ENCODE measurements at regions of chr16 and their contacts with region 1.

Region 1: GRCh38 chr16:21300309-21301167 is 22.4 kb upstream of the CRYM start:
- DNase-seq: peak; percentile 96 to 99
- ATAC-seq: peak; percentile 86 to 89
- H3K4me3 ChIP-seq: peak overlapping the region; percentile 63
- H3K27ac ChIP-seq: peak overlapping the region; percentile 82 to 93
- H3K4me1 ChIP-seq: peaks cover 30% of the 10 kb centered on the region
- CTCF ChIP-seq: peak; percentile 97
- EP300 ChIP-seq: 0 out of 5 replicates have a peak, but pooled peaks of 1 of the 2 experiments have one; percentile 7
- POLR2A ChIP-seq: peak; percentile 53
- RAD21 ChIP-seq: peak; percentile 98 to 99

Region 2: GRCh38 chr16:21158208-21159110 is 142.1 kb before region 1 on chr16 and contains the start of gene LDAF1:
- CTCF ChIA-PET with region 1: interaction called, 141 read pairs
- POLR2A ChIA-PET with region 1: interaction called, 24 read pairs
- DNase-seq: peak; percentile 64 to 75
- ATAC-seq: peak; percentile 97 to 99
- H3K4me3 ChIP-seq: peak within 1 kb of the TSS; percentile 83
- H3K27ac ChIP-seq: peak within 1 kb of the TSS; percentile 84 to 95
- H3K4me1 ChIP-seq: peaks cover 25% of the 10 kb centered on the region; the same call in 2 of the 3 replicates
- CTCF ChIP-seq: no peak
- EP300 ChIP-seq: no peak
- POLR2A ChIP-seq: no peak; the same call in 1 of the 2 replicates
- RAD21 ChIP-seq: no peak; a peak in 1 of 5 replicates
- polyA plus RNA-seq, gene LDAF1: 14.4 and 16.2 TPM in 2 replicates

Region 3: GRCh38 chr16:21167360-21167759 is 133.2 kb before region 1 on chr16:
- CTCF ChIA-PET with region 1: interaction called, 141 read pairs
- POLR2A ChIA-PET with region 1: interaction called, 3 read pairs
- DNase-seq: peak; percentile 39 to 62
- ATAC-seq: peak; percentile 48 to 80; a peak in 5 of 6 replicates
- H3K4me3 ChIP-seq: no peak overlapping the region
- H3K27ac ChIP-seq: peak overlapping the region in 1 of 2 experiments; percentile 30; a peak in 1 of 6 replicates
- H3K4me1 ChIP-seq: peaks cover 24% of the 10 kb centered on the region; the same call in 2 of the 3 replicates
- CTCF ChIP-seq: no peak
- EP300 ChIP-seq: no peak
- POLR2A ChIP-seq: no peak
- RAD21 ChIP-seq: no peak

Region 4: GRCh38 chr16:21194771-21195301 is 105.7 kb before region 1 on chr16:
- CTCF ChIA-PET with region 1: interaction called, 114 read pairs
- POLR2A ChIA-PET with region 1: interaction called, 3 read pairs
- DNase-seq: no peak
- ATAC-seq: no peak
- H3K4me3 ChIP-seq: no peak overlapping the region
- H3K27ac ChIP-seq: no peak overlapping the region
- H3K4me1 ChIP-seq: no peaks in the 10 kb centered on the region
- CTCF ChIP-seq: no peak
- EP300 ChIP-seq: no peak
- POLR2A ChIP-seq: no peak
- RAD21 ChIP-seq: no peak

Region 5: GRCh38 chr16:21239646-21240045 is 60.9 kb before region 1 on chr16:
- CTCF ChIA-PET with region 1: no interaction called
- POLR2A ChIA-PET with region 1: no interaction called
- DNase-seq: no peak
- ATAC-seq: no peak
- H3K4me3 ChIP-seq: no peak overlapping the region
- H3K27ac ChIP-seq: no peak overlapping the region
- H3K4me1 ChIP-seq: no peaks in the 10 kb centered on the region
- CTCF ChIP-seq: no peak
- EP300 ChIP-seq: no peak
- POLR2A ChIP-seq: no peak
- RAD21 ChIP-seq: no peak

Region 6: DNA sequence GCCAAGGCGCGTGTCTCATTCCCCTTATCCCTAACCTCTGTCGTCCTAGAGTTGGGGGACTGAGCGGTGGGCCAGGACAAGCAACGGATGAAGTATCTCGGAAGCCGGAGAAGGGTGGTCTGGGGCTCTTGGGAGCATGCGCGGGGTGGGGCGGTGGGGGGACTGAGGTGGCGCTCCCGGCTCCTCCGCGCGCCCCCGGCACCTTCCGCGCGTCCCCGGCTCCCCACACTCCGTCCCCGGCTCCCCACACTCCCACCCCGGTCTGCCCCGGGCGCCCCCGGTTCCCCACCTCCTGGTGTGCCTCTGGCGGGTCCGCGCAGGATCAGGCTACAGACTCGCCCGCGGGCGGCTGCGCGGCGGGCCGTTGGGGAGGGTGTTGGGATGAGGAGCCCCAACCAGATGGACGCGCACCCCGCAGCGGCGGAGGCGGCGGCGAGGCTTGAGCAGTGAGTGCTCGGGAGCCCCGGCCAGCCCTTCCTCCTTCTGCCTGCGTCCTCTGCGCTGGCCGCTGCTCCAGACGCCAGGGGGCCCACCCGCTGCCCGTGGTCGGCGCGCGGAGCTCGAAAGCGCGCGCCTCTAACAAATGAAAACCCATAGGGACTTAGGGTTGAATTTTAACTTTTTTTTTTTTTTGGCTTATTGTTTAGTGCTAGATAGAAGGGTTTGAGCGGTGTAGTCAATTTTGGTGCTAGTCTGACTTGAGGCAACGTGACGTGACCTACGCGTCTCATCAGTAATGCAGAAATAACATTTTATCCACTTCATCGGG is 16.8 kb before region 1 on chr16:
- CTCF ChIA-PET with region 1: interaction called, 83 read pairs
- POLR2A ChIA-PET with region 1: interaction called, 8 read pairs
- DNase-seq: peak; percentile 56 to 65
- ATAC-seq: peak; percentile 100
- H3K4me3 ChIP-seq: peak overlapping the region; percentile 50
- H3K27ac ChIP-seq: peak overlapping the region; percentile 68 to 86; a peak in 5 of 6 replicates
- H3K4me1 ChIP-seq: no peaks in the 10 kb centered on the region
- CTCF ChIP-seq: peak; percentile 47
- EP300 ChIP-seq: no peak
- POLR2A ChIP-seq: no peak
- RAD21 ChIP-seq: peak; percentile 30 to 56; a peak in 4 of 5 replicates

Region 7: GRCh38 chr16:21326459-21326858 is 25.9 kb after region 1 on chr16:
- CTCF ChIA-PET with region 1: no interaction called
- POLR2A ChIA-PET with region 1: no interaction called
- DNase-seq: no peak
- ATAC-seq: no peak
- H3K4me3 ChIP-seq: no peak overlapping the region
- H3K27ac ChIP-seq: no peak overlapping the region
- H3K4me1 ChIP-seq: peaks cover 6% of the 10 kb centered on the region; the same call in 1 of the 3 replicates
- CTCF ChIP-seq: no peak
- EP300 ChIP-seq: no peak
- POLR2A ChIP-seq: no peak
- RAD21 ChIP-seq: no peak